HCT116 (cell line): ENCODE measurements at regions of chr14 and their contacts with region 1.

Region 1: GRCh38 chr14:92511452-92512238 is 1.9 kb upstream of the RIN3 start:
- DNase-seq: peak; percentile 94
- ATAC-seq: peak; percentile 70
- H3K4me3 ChIP-seq: peak overlapping the region; percentile 14 to 33
- H3K27ac ChIP-seq: peak overlapping the region; percentile 79
- H3K4me1 ChIP-seq: peaks cover 36 to 54% of the 10 kb centered on the region in 2 experiments
- H3K27me3 ChIP-seq: no peaks in the 10 kb centered on the region
- CTCF ChIP-seq: no peak
- POLR2A ChIP-seq: no peak
- RAD21 ChIP-seq: no peak

Region 2: DNA sequence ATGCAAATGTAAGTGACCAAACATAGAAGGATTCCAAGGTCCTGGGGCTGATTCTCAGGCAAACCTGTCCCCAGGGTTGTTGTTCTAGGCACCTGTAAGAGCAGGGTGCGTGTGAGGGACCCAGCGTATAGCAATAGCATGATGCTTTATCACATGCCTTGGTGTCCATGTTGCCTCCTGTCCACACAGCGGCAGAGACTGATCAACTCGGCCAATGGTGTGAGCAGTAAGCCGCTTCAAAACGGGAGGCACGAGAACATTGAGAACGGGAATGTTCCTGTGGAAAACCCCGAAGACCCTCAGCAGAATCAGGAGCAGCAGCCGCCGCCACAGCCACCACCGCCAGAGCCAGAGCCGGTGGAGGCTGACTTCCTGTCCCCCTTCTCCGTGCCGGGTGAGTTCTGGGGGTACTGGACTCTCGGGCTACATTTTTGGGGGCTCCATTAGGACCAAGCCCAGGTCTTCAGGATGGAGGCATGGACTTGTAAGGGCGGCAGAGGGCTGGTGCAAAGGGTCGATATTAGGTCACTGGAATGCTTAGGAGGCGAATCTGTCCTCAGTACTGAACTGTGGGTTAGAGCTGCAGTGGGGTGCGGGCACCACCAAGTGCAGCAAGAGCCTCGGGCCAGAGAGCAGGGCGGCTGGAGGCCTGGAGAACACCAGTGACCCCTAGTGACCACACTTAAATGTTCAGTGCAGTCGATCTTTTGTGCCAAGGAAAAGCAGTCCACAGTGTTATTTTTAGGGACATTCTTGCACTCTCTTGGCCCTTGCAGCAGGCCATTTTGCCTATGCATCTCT is 55.2 kb before region 1 on chr14:
- CTCF ChIA-PET with region 1: interaction called, 3 read pairs
- POLR2A ChIA-PET with region 1: no interaction called
- RAD21 ChIA-PET with region 1: no interaction called
- intact Hi-C with region 1: loop called (anchors 2 kb)
- DNase-seq: peak; percentile 50
- ATAC-seq: peak; percentile 94
- H3K4me3 ChIP-seq: no peak overlapping the region
- H3K27ac ChIP-seq: no peak overlapping the region
- H3K4me1 ChIP-seq: peaks cover 0 to 12% of the 10 kb centered on the region in 2 experiments; a peak in 2 of 4 replicates
- H3K27me3 ChIP-seq: no peaks in the 10 kb centered on the region
- CTCF ChIP-seq: peak; percentile 70 to 78 (median 75)
- POLR2A ChIP-seq: no peak
- RAD21 ChIP-seq: peak; percentile 86

Region 3: GRCh38 chr14:92471919-92472318 is 39.7 kb before region 1 on chr14:
- CTCF ChIA-PET with region 1: no interaction called
- POLR2A ChIA-PET with region 1: no interaction called
- RAD21 ChIA-PET with region 1: no interaction called
- intact Hi-C with region 1: loop called (anchors 2 kb)
- DNase-seq: peak; percentile 62
- ATAC-seq: peak; percentile 93
- H3K4me3 ChIP-seq: no peak overlapping the region
- H3K27ac ChIP-seq: no peak overlapping the region; the same call in 1 of the 2 replicates
- H3K4me1 ChIP-seq: peaks cover 34 to 48% of the 10 kb centered on the region in 2 experiments
- H3K27me3 ChIP-seq: no peaks in the 10 kb centered on the region
- CTCF ChIP-seq: no peak
- POLR2A ChIP-seq: no peak
- RAD21 ChIP-seq: peak; percentile 20; the same call in 1 of the 2 replicates